ENCODE measurements at regions of chr3 and their contacts with region 1.

Region 1: DNA sequence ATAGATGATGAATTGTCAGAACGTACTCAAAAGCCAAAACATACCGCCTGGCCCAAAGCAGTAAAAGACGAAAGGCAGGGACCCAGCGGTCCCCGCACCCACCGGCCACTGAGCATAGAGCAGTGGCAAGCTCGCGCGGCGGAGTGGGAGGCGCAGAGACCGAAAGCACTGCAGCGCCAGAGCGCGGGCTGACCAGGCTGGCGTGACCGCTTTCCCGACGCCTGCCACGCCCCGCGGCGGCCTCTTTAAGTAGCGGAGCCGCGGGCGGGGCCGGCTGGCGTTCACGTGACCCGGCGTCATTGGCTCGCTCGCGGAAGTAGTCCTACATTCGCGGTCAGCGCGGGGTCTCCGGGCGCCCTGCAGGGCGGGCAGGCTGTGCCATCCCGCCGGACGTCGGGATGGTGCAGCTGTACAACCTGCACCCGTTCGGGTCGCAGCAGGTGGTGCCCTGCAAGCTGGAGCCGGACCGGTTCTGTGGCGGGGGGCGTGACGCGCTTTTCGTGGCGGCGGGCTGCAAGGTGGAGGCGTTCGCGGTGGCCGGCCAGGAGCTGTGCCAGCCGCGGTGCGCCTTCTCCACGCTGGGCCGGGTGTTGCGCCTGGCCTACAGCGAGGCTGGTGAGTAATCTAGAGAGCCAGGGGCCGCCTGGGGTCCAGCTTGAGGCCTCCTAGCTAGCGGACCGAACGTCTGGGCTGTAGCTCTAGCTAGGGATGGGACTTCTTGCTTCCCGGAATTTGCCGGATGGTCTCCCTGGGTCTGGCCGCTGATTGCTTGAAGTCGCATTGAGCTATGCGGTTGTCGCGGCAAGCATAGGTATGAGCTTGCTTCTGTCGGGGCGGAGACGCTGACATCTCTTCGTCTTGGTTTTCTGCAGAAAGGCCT is at the start of gene HPS3:
- DNase-seq: peak in 1 of 2 donors; percentile 93
- H3K4me3 ChIP-seq: peak within 1 kb of the TSS; percentile 78 to 94
- H3K27ac ChIP-seq: peak within 1 kb of the TSS; percentile 80
- H3K4me1 ChIP-seq: peaks cover 31% of the 10 kb centered on the region
- H3K27me3 ChIP-seq: no peaks in the 10 kb centered on the region
- CTCF ChIP-seq: peak in 1 of 3 experiments; percentile 24
- POLR2A ChIP-seq: peak; percentile 64 to 95
- total RNA-seq, gene HPS3: 25.5 TPM

Region 2: DNA sequence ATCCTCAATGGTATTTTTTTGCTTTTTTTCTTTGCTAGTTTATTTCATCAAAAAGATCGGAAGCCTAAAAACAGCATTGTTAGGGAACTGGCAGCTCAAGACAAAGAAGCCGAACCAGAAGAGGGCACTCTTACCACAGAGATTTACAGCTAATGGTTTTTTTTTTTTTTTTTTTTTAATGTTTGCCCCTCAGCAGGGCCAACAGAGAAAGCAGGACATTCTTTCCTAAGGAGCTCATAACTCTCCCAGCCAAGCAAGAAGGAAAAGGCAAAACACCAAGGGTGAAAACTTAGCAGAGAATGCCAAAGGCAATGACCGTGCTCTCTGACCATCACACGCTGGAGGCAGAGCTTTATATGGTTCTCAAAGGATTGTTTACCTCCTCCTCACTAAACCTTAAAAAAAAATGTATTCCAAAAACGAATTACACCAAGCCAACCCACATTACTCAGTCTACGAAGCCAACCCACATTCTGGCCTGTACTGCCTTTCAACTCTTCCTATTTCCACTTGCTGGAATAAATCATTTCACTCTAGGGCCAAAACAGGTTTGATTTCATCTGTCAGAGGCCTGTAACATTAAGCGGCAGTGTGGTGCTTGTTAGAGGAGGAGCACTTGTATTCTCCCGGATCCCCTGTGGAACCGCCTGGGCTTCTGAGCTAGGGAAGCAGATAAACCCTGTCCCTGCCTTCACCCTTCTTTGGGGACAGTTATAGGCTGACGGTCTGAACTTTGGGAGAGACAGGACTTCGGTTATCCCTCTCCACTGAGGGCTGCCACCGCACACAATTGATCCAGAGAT is 173.8 kb before region 1 on chr3:
- intact Hi-C with region 1: loop called (anchors 5 kb)
- DNase-seq: peak in 1 of 2 donors; percentile 93
- H3K4me3 ChIP-seq: no peak overlapping the region
- H3K27ac ChIP-seq: peak overlapping the region; percentile 85
- H3K4me1 ChIP-seq: peaks cover 9% of the 10 kb centered on the region
- H3K27me3 ChIP-seq: no peaks in the 10 kb centered on the region
- CTCF ChIP-seq: peak; percentile 39 to 49 (median 42)
- POLR2A ChIP-seq: no peak